Ovary (tissue), 10 donors: ENCODE measurements at regions of chr5 and their contacts with region 1.

Region 1: DNA sequence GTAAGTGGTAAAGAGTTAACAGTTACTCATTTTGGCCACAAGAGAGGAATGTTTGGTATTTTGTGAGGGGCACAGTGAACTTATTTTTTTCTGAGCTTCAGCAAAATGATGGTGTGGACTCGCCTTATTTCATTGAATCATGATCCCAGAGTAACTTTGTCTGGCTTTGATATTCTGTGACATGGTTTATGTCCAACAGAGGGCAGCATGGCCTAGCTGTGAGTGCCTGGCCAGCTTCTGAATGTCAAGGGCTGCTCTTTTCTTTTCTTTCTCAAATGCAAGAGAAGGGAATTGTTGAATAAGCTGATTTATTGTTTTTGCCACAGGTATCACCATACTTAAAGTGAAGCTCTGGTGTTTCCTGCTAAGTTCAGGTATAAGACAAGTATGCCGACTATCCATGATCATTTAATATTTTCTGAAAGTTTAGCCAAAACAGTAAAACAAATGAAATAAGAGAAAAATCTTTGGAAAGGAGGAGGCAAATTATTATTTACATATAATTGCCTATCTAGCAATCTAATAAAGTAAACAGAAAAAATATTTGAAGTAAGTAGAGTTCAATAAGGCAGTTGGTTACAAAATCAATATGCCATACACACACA is 31.7 kb downstream of the MRPL22 start:
- DNase-seq: peak in 3 of 5 donors; percentile 21 to 41 (median 31)
- H3K4me3 ChIP-seq: no peak overlapping the region
- H3K27ac ChIP-seq: no peak overlapping the region
- H3K4me1 ChIP-seq: no peaks in the 10 kb centered on the region
- H3K27me3 ChIP-seq: no peaks in the 10 kb centered on the region
- CTCF ChIP-seq: peak in 2 of 3 donors; percentile 8 to 16
- EP300 ChIP-seq: no peak
- POLR2A ChIP-seq: no peak

Region 2: DNA sequence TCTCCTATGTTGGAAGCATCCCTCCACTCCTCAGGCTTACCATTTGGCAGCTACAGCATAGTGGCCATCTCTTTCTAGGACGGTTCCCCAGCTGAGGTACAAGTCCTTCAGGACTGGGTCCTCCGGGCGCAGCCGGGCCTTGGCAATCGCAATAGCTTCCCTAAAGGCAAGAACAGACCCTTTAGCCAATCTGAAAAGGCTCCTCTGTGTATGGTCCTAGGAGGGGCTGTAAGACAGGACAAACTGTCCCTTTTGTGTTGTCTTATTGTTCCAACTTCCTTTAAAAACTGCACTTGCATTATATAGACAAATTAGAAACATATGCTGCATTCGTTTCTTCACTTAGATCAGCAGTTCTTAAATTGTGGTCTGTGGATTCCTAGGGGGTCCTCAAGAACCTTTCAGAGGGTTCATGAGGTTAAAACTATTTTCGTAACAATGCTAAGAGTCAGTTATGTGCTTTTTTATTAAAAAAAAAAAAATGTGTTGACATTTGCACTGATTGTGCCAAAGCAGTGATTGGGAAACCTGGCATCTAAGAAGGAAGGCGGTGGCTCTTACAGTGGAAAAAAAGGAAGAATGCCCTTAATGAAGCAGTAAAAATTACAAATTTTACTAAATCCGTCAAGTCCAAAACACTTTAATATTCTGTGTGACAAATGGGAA is 73.3 kb before region 1 on chr5:
- intact Hi-C with region 1: no loop called
- DNase-seq: no peak
- H3K4me3 ChIP-seq: no peak overlapping the region
- H3K27ac ChIP-seq: no peak overlapping the region
- H3K4me1 ChIP-seq: no peaks in the 10 kb centered on the region
- H3K27me3 ChIP-seq: no peaks in the 10 kb centered on the region
- CTCF ChIP-seq: no peak
- EP300 ChIP-seq: no peak
- POLR2A ChIP-seq: no peak

Region 3: DNA sequence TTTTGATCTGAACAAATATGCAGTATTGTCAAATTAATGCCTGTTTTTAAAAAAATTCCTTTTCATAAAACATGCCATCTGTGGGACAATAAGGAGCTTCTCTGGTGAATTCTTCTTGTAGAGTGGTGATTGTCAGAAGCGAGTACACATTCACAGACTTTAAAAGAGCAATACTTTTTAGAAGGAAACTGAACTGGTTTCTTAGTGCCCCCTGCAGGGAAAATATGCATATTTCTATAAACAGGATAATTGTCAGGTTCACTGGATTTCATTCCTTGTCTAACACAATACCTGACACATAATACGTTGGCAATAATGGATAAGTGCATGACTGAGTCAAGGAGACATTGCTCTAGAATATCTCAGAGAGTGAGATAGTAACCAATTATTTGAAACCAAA is 174.6 kb after region 1 on chr5:
- intact Hi-C with region 1: loop called in 1 of 4 experiments (anchors 10 kb)
- DNase-seq: no peak
- H3K4me3 ChIP-seq: no peak overlapping the region
- H3K27ac ChIP-seq: no peak overlapping the region
- H3K4me1 ChIP-seq: no peaks in the 10 kb centered on the region
- H3K27me3 ChIP-seq: no peaks in the 10 kb centered on the region
- CTCF ChIP-seq: peak in 2 of 3 donors; percentile 12 to 31
- EP300 ChIP-seq: no peak
- POLR2A ChIP-seq: no peak

Region 4: DNA sequence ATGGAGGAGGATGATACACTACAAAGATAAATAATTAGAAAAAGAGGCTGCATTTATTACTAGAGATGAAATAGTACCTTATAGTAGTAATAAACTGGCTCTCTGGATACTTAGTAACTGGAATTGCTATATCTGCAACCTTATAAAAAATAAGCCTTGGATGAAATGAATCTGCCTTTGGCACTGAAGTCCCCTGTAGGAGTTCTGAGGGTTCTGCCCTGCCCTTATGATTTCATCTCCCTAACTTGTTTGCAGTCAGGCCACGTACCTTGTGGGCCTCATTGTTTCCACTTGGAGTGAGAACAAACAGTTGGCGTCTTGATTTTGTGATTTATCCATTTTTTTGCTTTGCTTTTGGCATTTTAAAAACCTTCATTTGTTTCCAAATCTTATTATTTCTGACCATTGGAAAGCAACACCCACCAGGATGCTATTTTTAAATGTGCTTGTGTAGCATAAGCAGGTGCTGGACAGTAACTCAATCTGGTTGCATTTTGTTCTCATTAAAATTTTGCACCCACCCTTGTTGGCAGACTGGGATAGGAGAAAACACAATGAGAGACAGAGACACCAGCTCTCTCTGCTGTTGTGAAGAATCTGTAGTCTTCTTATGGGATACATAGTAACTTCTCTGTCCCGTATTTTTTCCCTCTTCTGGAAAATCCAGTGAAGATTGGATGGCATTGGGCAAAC is 835.5 kb after region 1 on chr5:
- intact Hi-C with region 1: no loop called
- DNase-seq: no peak
- H3K4me3 ChIP-seq: no peak overlapping the region
- H3K27ac ChIP-seq: no peak overlapping the region
- H3K4me1 ChIP-seq: no peaks in the 10 kb centered on the region
- H3K27me3 ChIP-seq: no peaks in the 10 kb centered on the region
- CTCF ChIP-seq: no peak
- EP300 ChIP-seq: no peak
- POLR2A ChIP-seq: no peak